Heart right ventricle (tissue), 16 donors: ENCODE measurements at regions of chr3 and their contacts with region 1.

Region 1: DNA sequence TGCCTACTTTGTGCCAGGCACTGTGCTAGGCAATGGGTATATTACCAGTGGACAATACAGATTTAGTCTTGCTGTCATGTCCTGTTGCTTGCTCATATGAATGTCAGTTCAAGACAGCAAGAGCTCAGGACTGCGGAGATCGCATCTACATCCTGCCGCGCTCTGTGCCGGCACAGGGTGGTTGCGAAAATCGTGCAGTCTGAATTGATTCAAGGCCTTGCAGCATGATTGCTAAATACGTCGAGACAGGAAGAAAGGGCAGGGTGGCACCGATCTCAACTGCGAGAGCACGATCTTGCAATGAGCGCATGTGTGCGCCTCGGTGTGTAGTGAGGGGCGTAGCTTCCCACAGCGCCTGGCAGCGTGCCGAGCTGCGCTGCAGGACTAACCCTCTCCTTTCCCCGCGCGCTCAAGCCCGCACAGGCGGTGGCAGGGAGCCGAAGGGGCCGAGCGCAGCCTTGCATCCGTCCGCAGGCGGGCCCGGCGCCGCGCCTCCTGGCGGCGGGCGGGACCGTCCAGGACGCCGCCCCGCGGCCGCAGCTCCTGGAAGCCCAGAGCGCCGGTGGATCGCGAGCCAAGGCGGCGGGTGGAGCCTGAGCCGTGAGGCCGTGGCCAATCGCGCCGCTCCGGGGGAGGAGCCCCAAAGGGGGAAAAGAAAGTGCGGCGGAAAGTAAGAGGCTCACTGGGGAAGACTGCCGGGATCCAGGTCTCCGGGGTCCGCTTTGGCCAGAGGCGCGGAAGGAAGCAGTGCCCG is at the start of gene IL1RAP:
- DNase-seq: peak; percentile 90 to 92
- ATAC-seq: peak; percentile 97 to 99 (median 99)
- H3K4me3 ChIP-seq: peak within 1 kb of the TSS; percentile 42 to 95 (median 84)
- H3K27ac ChIP-seq: peak within 1 kb of the TSS in 9 of 10 donors; percentile 70 to 93 (median 80)
- H3K4me1 ChIP-seq: peaks cover 0 to 39% (median 10%) of the 10 kb centered on the region in 9 donors
- H3K27me3 ChIP-seq: no peaks in the 10 kb centered on the region
- CTCF ChIP-seq: peak; percentile 55 to 96 (median 85)
- total RNA-seq, gene IL1RAP: 3.9 to 11.9 (median 8.7) TPM

Region 2: GRCh38 chr3:190566043-190566933 is 52.7 kb after region 1 on chr3:
- intact Hi-C with region 1: loop called in 1 of 10 experiments (anchors 5 kb)
- DNase-seq: peak; percentile 57 to 84
- ATAC-seq: peak; percentile 67 to 98 (median 89)
- H3K4me3 ChIP-seq: no peak overlapping the region
- H3K27ac ChIP-seq: peak overlapping the region in 8 of 10 donors; percentile 20 to 89 (median 50)
- H3K4me1 ChIP-seq: peaks cover 0 to 42% (median 21%) of the 10 kb centered on the region in 9 donors
- H3K27me3 ChIP-seq: no peaks in the 10 kb centered on the region
- CTCF ChIP-seq: no peak

Region 3: DNA sequence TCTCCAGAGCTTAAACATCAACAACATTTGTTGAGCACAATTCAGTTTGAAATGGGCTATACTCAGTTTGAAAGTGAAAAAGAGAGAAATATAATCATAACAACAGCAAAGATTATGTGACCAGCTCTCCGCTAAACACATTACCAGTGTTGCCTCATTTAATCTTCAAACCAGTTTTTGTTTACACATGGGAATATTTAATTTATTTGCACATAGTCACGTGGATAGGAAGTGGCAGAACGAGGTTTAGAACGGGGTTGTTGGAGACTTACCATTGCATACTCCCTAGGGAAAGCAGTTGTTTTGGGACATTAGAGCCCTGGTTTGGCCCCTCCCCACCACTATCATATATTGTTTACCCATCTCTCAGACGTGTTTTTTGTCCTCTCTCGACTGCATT is 77.5 kb after region 1 on chr3:
- intact Hi-C with region 1: loop called in 1 of 10 experiments (anchors 10 kb)
- DNase-seq: no peak
- ATAC-seq: no peak
- H3K4me3 ChIP-seq: no peak overlapping the region
- H3K27ac ChIP-seq: no peak overlapping the region
- H3K4me1 ChIP-seq: peaks cover 0 to 32% (median 15%) of the 10 kb centered on the region in 9 donors
- H3K27me3 ChIP-seq: no peaks in the 10 kb centered on the region
- CTCF ChIP-seq: no peak

Region 4: GRCh38 chr3:190739641-190740185 is 226.1 kb after region 1 on chr3:
- intact Hi-C with region 1: no loop called
- DNase-seq: no peak
- ATAC-seq: no peak
- H3K4me3 ChIP-seq: no peak overlapping the region
- H3K27ac ChIP-seq: no peak overlapping the region
- H3K4me1 ChIP-seq: no peaks in the 10 kb centered on the region
- H3K27me3 ChIP-seq: no peaks in the 10 kb centered on the region
- CTCF ChIP-seq: no peak